Activated CD4-positive, alpha-beta memory T cell treated with anti-CD3 and anti-CD28 coated beads for 36 hours (primary cell): ENCODE measurements at regions of chrX and their contacts with region 1.

Region 1: GRCh38 chrX:56802921-56803849 is 74.1 kb downstream of the NBDY start:
- DNase-seq: peak; percentile 69
- H3K4me3 Mint-ChIP-seq: no peak overlapping the region
- H3K27ac Mint-ChIP-seq: peak overlapping the region; percentile 42
- H3K4me1 Mint-ChIP-seq: peaks cover 34% of the 10 kb centered on the region
- H3K27me3 Mint-ChIP-seq: no peaks in the 10 kb centered on the region

Region 2: GRCh38 chrX:56813318-56813837 is 10.2 kb after region 1 on chrX:
- CTCF ChIA-PET with region 1: no interaction called
- POLR2A ChIA-PET with region 1: no interaction called
- intact Hi-C with region 1: loop called (anchors 1 kb)
- DNase-seq: peak; percentile 69
- H3K4me3 Mint-ChIP-seq: peak overlapping the region; percentile 68
- H3K27ac Mint-ChIP-seq: peak overlapping the region; percentile 93
- H3K4me1 Mint-ChIP-seq: peaks cover 42% of the 10 kb centered on the region
- H3K27me3 Mint-ChIP-seq: no peaks in the 10 kb centered on the region

Region 3: GRCh38 chrX:57121162-57121741 is 318.1 kb after region 1 on chrX and contains the start of gene SPIN2B:
- CTCF ChIA-PET with region 1: no interaction called
- POLR2A ChIA-PET with region 1: no interaction called
- intact Hi-C with region 1: loop called (anchors 5 kb)
- DNase-seq: peak; percentile 90
- H3K4me3 Mint-ChIP-seq: peak within 1 kb of the TSS; percentile 84
- H3K27ac Mint-ChIP-seq: peak within 1 kb of the TSS; percentile 86
- H3K4me1 Mint-ChIP-seq: peaks cover 5% of the 10 kb centered on the region
- H3K27me3 Mint-ChIP-seq: no peaks in the 10 kb centered on the region
- total RNA-seq, gene SPIN2B: 5.1 to 7.7 TPM

Region 4: GRCh38 chrX:57178605-57179004 is 375.4 kb after region 1 on chrX:
- CTCF ChIA-PET with region 1: no interaction called
- POLR2A ChIA-PET with region 1: no interaction called
- intact Hi-C with region 1: no loop called
- DNase-seq: no peak
- H3K4me3 Mint-ChIP-seq: no peak overlapping the region
- H3K27ac Mint-ChIP-seq: no peak overlapping the region
- H3K4me1 Mint-ChIP-seq: no peaks in the 10 kb centered on the region
- H3K27me3 Mint-ChIP-seq: no peaks in the 10 kb centered on the region

Region 5: DNA sequence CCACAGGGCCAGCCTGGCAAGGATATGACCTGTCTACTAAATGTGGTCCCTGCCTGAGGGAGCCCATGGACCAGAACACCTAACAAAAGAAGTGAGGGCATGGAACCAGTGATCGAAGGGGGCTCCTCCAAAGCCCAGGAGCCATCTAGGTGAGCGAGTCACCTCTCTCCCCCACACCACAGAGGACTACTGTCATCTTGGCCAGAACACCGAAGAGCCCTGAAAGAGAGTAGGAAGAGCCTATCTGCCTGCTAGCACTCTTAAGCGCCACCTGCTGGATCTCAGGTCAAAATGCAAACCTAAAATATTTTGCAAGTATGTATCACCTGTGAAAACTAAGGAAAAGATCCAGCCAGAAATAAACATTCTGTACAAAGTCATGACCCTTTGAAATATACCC is 650.7 kb after region 1 on chrX:
- CTCF ChIA-PET with region 1: interaction called, 3 read pairs
- POLR2A ChIA-PET with region 1: no interaction called
- intact Hi-C with region 1: loop called (anchors 10 kb)
- DNase-seq: peak; percentile 13
- H3K4me3 Mint-ChIP-seq: no peak overlapping the region
- H3K27ac Mint-ChIP-seq: peak overlapping the region; percentile 38
- H3K4me1 Mint-ChIP-seq: no peaks in the 10 kb centered on the region
- H3K27me3 Mint-ChIP-seq: no peaks in the 10 kb centered on the region